ENCODE measurements at regions of chr5 and their contacts with region 1.

Region 1: DNA sequence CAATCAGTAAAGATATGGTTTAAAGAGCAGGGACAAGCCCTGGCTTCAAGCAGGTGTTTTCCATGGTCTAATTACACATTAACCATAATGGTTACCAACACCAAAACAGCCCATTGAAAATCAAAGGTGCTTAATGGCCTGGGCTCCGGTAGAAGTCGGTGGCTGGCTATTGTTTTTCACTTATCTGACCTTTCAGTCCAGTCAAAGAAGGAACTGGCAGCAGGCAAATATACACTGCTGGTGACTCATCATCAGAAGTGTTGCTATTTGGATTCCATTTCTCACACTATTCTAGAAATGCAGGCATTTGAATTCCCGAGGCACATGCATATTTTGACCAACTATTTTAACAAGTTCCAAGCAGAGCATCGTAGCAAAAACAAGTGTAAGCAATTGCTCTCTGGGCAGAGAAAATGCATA is 26.3 kb upstream of the GABRP start:
- DNase-seq: peak; percentile 83
- H3K4me3 Mint-ChIP-seq: peak overlapping the region; percentile 24
- H3K27ac Mint-ChIP-seq: peak overlapping the region; percentile 93
- H3K4me1 Mint-ChIP-seq: peaks cover 71% of the 10 kb centered on the region
- H3K27me3 Mint-ChIP-seq: no peaks in the 10 kb centered on the region
- CTCF ChIP-seq: no peak

Region 2: DNA sequence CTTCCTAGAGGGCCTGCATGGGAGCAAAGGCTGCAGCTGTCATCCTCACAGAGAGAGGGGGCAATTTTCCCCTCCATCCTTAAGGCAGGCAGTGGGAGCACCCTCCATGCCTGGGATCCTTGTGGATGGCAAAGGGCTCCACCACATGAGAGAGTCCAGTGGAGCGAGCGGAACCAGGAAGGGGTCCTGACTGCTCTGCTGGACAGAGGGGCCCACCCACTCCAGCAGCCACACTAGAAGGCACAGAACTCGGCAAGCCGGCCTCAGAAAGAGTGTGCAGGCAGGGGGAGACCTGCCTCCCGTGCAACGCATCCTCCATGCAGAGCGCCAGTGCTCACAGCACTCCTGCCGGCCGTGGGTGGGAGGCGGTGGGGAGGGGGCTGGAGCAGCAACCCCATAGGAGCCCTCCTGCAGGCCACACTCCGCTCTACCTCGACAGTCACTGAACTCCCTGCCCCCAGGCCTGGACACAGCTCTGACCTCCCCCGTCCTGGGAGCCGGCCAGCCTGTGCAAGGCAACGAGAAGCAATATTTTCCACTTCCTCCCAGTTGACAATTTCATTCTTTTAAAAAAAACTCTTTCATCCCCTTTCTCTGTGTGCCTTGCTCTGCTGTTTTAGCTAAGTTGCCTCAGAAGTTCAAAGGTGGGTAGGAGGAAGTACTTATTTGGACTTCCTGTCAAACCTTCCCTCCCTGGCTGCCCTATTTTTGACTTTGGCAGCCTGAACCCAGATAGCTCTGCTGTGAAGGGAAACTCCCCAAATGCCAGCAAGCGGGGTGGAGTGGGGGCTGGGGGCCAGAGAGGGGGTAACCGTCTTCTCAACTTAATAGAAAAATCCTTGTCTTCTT is 454.3 kb before region 1 on chr5:
- CTCF ChIA-PET with region 1: no interaction called
- intact Hi-C with region 1: no loop called
- DNase-seq: no peak
- H3K4me3 Mint-ChIP-seq: no peak overlapping the region
- H3K27ac Mint-ChIP-seq: no peak overlapping the region
- H3K4me1 Mint-ChIP-seq: peaks cover 13% of the 10 kb centered on the region
- H3K27me3 Mint-ChIP-seq: peaks cover 76% of the 10 kb centered on the region
- CTCF ChIP-seq: no peak

Region 3: GRCh38 chr5:170782438-170782837 is 25.2 kb after region 1 on chr5:
- CTCF ChIA-PET with region 1: interaction called, 12 read pairs
- intact Hi-C with region 1: loop called (anchors 2 kb)
- DNase-seq: peak; percentile 91
- H3K4me3 Mint-ChIP-seq: peak overlapping the region; percentile 99
- H3K27ac Mint-ChIP-seq: peak overlapping the region; percentile 81
- H3K4me1 Mint-ChIP-seq: peaks cover 65% of the 10 kb centered on the region
- H3K27me3 Mint-ChIP-seq: no peaks in the 10 kb centered on the region
- CTCF ChIP-seq: no peak

Region 4: DNA sequence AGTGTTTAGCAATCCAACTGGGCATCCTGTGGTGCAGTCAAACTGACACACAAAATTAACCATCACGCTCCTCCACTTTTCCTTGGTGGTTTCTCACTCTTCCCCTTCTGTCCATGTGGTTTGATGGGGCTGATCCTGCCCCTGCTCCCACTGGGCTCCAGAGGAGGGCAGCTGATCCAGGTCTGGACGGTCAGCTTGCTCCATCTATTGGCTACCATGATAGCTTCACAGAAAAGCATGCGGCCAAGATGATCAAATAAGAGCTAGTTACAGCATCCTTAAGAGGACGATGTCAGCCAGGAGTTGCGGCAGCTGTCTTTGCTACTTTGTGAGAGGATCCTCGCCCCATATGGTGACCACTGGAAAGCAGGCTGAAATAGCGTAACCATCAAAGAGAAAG is 75.1 kb after region 1 on chr5:
- CTCF ChIA-PET with region 1: no interaction called
- intact Hi-C with region 1: loop called (anchors 5 kb)
- DNase-seq: no peak
- H3K4me3 Mint-ChIP-seq: no peak overlapping the region
- H3K27ac Mint-ChIP-seq: no peak overlapping the region
- H3K4me1 Mint-ChIP-seq: peaks cover 28% of the 10 kb centered on the region
- H3K27me3 Mint-ChIP-seq: no peaks in the 10 kb centered on the region
- CTCF ChIP-seq: no peak

Region 5: GRCh38 chr5:170861837-170862766 is 104.9 kb after region 1 on chr5 and contains the start of gene RANBP17:
- CTCF ChIA-PET with region 1: no interaction called
- intact Hi-C with region 1: loop called (anchors 5 kb)
- DNase-seq: peak; percentile 92
- H3K4me3 Mint-ChIP-seq: peak within 1 kb of the TSS; percentile 70
- H3K27ac Mint-ChIP-seq: peak within 1 kb of the TSS; percentile 86
- H3K4me1 Mint-ChIP-seq: peaks cover 46% of the 10 kb centered on the region
- H3K27me3 Mint-ChIP-seq: no peaks in the 10 kb centered on the region
- CTCF ChIP-seq: no peak
- total RNA-seq, gene RANBP17: 69.3 and 117 TPM in 2 replicates